ENCODE measurements at regions of chr16 and their contacts with region 1.

Region 1: GRCh38 chr16:57167953-57168352 is 17.9 kb downstream of the PSME3IP1 start:
- DNase-seq: peak; percentile 31
- H3K4me3 Mint-ChIP-seq: no peak overlapping the region
- H3K27ac Mint-ChIP-seq: no peak overlapping the region
- H3K4me1 Mint-ChIP-seq: peaks cover 3% of the 10 kb centered on the region
- H3K27me3 Mint-ChIP-seq: no peaks in the 10 kb centered on the region

Region 2: GRCh38 chr16:57084257-57084770 is 83.6 kb before region 1 on chr16:
- CTCF ChIA-PET with region 1: interaction called, 12 read pairs
- DNase-seq: peak; percentile 81
- H3K4me3 Mint-ChIP-seq: no peak overlapping the region
- H3K27ac Mint-ChIP-seq: peak overlapping the region; percentile 70
- H3K4me1 Mint-ChIP-seq: peaks cover 8% of the 10 kb centered on the region
- H3K27me3 Mint-ChIP-seq: peaks cover 16% of the 10 kb centered on the region

Measured in activated naive CD4-positive, alpha-beta T cell treated with anti-CD3 and anti-CD28 coated beads, Interleukin-2, amount 10 ng/mL, durations not matched to agents 7 days and 5 days (primary cell).